Gastrocnemius medialis (tissue), 4 donors: ENCODE measurements at regions of chr12 and their contacts with region 1.

Region 1: GRCh38 chr12:110100315-110100970 is 23.7 kb upstream of the IFT81 start:
- DNase-seq: peak; percentile 50 to 60
- ATAC-seq: peak; percentile 47 to 69
- H3K4me3 ChIP-seq: no peak overlapping the region
- H3K27ac ChIP-seq: peak overlapping the region; percentile 19 to 82 (median 60)
- H3K4me1 ChIP-seq: peaks cover 17 to 22% of the 10 kb centered on the region in 2 donors
- H3K27me3 ChIP-seq: no peaks in the 10 kb centered on the region
- CTCF ChIP-seq: peak; percentile 87 to 96 (median 92)
- POLR2A ChIP-seq: no peak

Region 2: DNA sequence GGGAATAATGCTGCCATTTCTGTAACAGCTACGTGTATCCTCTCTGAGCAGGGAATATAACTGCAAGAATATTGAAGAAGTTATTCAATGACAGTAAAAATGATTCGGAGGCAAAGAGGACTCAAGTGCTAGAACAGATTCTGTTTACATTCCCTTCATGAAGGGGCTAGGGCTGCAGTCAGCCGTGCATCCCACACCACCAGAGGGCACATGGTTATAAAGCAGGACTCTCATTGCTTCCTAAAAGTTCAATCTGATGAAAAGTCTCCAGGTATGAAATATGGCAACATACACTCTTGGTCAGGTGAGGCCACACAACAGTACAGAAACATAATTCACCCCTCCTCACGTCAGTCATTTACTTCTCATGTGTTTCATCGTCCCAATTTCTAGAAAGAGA is 166.4 kb before region 1 on chr12:
- in situ Hi-C with region 1: no loop called
- intact Hi-C with region 1: no loop called
- DNase-seq: no peak
- ATAC-seq: no peak
- H3K4me3 ChIP-seq: no peak overlapping the region
- H3K27ac ChIP-seq: no peak overlapping the region
- H3K4me1 ChIP-seq: no peaks in the 10 kb centered on the region
- H3K27me3 ChIP-seq: no peaks in the 10 kb centered on the region
- CTCF ChIP-seq: no peak
- POLR2A ChIP-seq: no peak

Region 3: DNA sequence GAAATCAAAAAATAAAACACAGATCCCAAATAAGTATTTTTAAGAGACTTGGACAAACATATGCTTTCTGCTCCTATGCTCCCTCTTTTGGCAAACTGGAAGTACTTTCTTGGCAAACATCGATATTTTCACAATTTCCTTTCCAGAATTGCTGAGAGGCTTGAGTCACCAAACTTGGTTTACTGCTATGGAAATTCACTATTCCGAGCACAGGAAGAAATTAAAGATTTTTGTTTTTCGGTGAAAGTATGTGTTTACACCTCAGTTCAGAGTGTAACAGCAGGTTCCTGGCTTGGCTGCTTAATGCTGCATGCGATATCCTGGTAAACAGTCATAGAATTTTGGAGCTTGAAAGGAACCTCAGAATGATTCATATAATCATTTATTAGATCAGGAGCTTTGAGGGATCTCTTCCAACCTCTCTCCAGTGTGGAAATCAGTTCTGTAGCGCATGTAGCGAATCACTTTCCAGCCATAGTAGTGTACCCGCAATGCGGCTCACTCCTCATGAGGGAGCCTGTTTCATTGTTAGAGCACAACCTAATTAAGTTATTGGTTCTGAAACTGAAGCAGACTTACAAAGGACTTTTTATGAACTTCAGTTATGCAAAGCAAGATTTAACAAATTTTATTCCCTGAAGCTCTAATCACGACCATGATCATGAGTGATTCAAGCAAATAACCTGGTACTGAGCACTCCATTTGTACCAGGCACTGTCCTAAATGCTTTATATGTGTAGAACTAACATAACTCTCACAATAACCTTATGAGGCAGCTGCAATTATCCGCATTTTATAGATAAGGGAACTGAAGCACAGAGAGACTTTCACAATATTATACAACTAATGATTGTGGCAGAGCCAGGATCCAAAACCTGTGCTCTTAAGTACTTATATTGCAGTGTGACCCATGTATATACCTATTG is 124.2 kb after region 1 on chr12:
- in situ Hi-C with region 1: loop called in 1 of 4 experiments (anchors 10 kb)
- intact Hi-C with region 1: loop called (anchors 2 kb)
- DNase-seq: peak; percentile 36 to 44
- ATAC-seq: peak; percentile 81 to 91
- H3K4me3 ChIP-seq: peak overlapping the region; percentile 4 to 34 (median 18)
- H3K27ac ChIP-seq: peak overlapping the region; percentile 75 to 82 (median 80)
- H3K4me1 ChIP-seq: peaks cover 25 to 41% of the 10 kb centered on the region in 2 donors
- H3K27me3 ChIP-seq: no peaks in the 10 kb centered on the region
- CTCF ChIP-seq: peak in 4 of 5 experiments; percentile 53 to 76 (median 62)
- POLR2A ChIP-seq: no peak

Region 4: DNA sequence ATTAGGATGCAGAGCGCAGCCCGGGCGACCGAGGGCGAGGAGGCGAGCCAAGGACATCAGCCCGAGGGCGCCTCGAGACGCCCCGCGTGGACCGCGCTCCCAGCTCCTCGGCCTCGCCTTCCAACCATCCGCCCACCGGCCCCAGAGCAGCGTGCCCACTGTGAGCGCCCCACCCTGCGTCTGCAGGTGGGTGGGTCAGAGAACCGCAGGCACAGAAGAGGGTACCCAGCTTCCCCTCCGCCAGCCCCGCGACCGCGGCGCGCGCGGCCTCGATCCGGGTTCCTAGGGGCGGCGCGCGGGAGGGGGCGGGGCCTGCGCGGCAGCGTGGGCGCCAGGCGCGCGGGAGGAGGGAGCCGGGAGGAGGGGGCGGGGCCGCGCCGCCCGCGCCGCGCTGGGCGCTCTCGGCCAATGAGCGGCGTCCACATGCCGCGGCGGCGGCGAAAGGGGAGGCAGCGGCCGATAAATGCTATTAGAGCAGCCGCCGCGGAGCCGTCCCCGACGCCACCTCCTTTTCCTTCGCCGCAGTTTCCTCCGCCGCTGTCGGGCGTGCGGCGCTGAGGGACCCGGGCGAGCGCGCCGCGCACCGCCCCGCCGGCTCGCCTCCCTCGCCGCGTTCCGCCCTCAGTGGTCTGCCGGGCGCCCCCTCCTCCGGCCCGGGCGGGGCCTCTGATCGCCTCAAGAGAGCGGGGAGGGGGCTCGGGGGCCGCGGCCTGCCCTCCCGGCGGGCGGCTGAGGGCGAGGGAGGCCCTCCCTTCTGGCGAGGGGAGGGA is 180.5 kb after region 1 on chr12 and contains the start of gene ATP2A2:
- in situ Hi-C with region 1: no loop called
- intact Hi-C with region 1: loop called (anchors 2 kb)
- DNase-seq: peak; percentile 79 to 85
- ATAC-seq: peak; percentile 75 to 82
- H3K4me3 ChIP-seq: peak within 1 kb of the TSS; percentile 82 to 93 (median 90)
- H3K27ac ChIP-seq: peak within 1 kb of the TSS; percentile 93 to 97 (median 96)
- H3K4me1 ChIP-seq: peaks cover 0 to 18% of the 10 kb centered on the region in 2 donors
- H3K27me3 ChIP-seq: no peaks in the 10 kb centered on the region
- CTCF ChIP-seq: no peak
- POLR2A ChIP-seq: peak; percentile 97 to 99
- total RNA-seq, gene ATP2A2: 788 to 1,983 (median 1,302) TPM

Region 5: GRCh38 chr12:110403146-110403975 is 302.9 kb after region 1 on chr12 and contains the start of gene ANAPC7:
- in situ Hi-C with region 1: no loop called
- intact Hi-C with region 1: loop called (anchors 1 kb)
- DNase-seq: peak; percentile 81 to 90
- ATAC-seq: peak; percentile 96 to 97
- H3K4me3 ChIP-seq: peak within 1 kb of the TSS; percentile 76 to 98 (median 96)
- H3K27ac ChIP-seq: peak within 1 kb of the TSS; percentile 90 to 99 (median 92)
- H3K4me1 ChIP-seq: peaks cover 11 to 12% of the 10 kb centered on the region in 2 donors
- H3K27me3 ChIP-seq: no peaks in the 10 kb centered on the region
- CTCF ChIP-seq: no peak
- POLR2A ChIP-seq: peak; percentile 35 to 51
- total RNA-seq, gene ANAPC7: 27.5 to 57.1 (median 38.2) TPM

Region 6: DNA sequence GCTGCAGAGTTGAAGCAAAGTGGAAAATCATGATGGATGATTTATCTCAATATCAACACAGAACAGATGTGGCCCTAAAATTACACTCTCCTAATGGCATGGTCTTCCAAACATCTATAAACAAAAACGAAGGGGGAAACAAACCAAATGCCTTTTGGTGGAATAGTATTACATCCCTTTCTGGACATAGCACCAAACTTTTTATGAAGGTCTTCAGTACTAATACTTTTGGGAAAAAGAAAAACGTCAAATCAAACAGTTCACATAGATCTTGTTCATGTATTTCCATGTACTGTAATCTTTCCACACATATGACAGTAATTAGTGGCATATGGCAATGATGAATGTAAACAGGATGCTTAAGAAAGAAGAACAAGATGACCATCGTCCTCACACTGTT is 326.0 kb after region 1 on chr12:
- in situ Hi-C with region 1: loop called (anchors 5 to 10 kb)
- intact Hi-C with region 1: loop called (anchors 1 kb)
- DNase-seq: no peak
- ATAC-seq: no peak
- H3K4me3 ChIP-seq: no peak overlapping the region
- H3K27ac ChIP-seq: no peak overlapping the region
- H3K4me1 ChIP-seq: no peaks in the 10 kb centered on the region
- H3K27me3 ChIP-seq: no peaks in the 10 kb centered on the region
- CTCF ChIP-seq: no peak
- POLR2A ChIP-seq: no peak

Region 7: DNA sequence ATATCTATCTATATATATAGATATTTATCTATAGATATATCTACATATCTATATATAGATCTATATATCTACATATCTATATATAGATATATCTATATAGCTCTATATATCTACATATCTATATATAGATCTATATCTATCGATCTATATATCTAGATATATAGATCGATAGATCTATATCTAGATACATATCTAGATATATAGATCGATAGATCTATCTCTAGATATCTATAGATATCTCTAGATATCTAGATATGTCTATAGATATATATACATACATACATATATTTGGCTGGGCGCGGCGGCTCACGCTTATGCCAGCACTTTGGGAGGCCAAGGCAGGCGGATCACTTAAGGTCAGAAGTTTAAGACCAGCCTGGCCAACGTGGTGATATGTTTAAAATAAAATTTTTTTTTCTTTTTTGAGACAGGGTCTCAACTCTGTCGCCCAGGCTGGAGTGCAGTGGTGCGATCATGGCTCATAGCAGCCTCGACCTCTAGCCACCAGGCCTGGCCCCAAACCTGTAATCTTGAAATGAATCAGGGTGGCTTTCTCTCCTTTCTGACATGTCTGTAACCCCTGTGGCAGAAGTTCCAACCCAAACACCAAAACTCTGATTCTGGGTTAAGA is 331.6 kb after region 1 on chr12:
- in situ Hi-C with region 1: loop called (anchors 5 to 10 kb)
- intact Hi-C with region 1: loop called (anchors 1 kb)
- DNase-seq: no peak
- ATAC-seq: no peak
- H3K4me3 ChIP-seq: peak overlapping the region; percentile 59 to 61 (median 60)
- H3K27ac ChIP-seq: peak overlapping the region in 2 of 4 donors; percentile 31 to 33
- H3K4me1 ChIP-seq: no peaks in the 10 kb centered on the region
- H3K27me3 ChIP-seq: no peaks in the 10 kb centered on the region
- CTCF ChIP-seq: no peak
- POLR2A ChIP-seq: no peak

Region 8: DNA sequence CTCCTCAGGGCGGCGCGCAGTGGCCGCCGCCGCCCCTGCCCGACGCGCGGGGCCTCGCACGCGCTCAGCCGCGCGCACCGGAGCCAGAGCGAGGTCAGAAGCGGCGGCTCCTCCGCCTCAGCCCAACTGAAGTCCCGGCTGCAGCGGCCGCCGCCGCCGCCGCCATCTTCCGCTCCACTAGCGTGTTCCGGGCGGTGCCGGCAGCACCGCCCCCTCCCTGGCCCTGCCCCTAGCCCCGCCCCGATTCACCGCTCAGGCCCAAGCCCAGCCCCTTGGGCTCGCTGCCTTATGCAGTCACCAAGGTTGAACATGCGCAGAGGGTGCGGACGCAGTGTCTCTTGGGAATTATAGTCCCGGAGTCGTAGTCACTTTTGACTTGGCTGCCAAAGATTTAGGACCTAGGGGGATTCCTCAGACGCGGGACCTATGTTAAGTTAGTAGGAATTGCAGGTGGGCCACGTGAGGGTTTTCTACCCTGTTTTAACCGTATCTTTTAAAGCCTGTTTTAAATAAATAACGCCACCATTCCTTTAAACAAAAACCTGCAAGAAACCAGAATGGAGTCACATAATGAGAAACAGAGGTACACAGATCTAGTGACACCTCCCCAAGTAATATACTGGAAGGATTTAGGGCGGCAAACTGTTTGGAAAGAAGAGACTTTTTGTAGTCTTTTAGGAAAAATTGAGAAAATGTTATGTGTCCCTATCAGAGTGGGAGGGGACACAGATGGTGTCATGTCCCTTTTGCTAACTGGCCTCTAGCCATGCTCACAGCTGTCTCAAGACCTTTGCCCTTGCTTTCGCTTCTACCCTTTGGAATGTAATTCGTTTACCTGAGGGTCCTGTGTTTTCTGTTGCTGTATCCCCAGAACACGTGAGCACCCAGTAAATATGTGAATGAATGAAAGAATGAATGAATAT is 483.0 kb after region 1 on chr12 and contains the start of gene PPTC7:
- in situ Hi-C with region 1: no loop called
- intact Hi-C with region 1: loop called (anchors 10 kb)
- DNase-seq: peak; percentile 96 to 97
- ATAC-seq: peak; percentile 60 to 70
- H3K4me3 ChIP-seq: peak within 1 kb of the TSS; percentile 67 to 83 (median 78)
- H3K27ac ChIP-seq: peak within 1 kb of the TSS; percentile 91 to 98 (median 94)
- H3K4me1 ChIP-seq: peaks cover 56 to 58% of the 10 kb centered on the region in 2 donors
- H3K27me3 ChIP-seq: no peaks in the 10 kb centered on the region
- CTCF ChIP-seq: peak in 1 of 5 experiments; percentile 7
- POLR2A ChIP-seq: peak; percentile 98 to 99
- total RNA-seq, gene PPTC7: 27.6 to 85.8 (median 58.4) TPM